ENCODE measurements at regions of chr6 and their contacts with region 1.

Region 1: GRCh38 chr6:134247231-134247833 is 70.6 kb downstream of the SGK1 start:
- DNase-seq: peak in 8 of 9 donors; percentile 67 to 96 (median 93)
- ATAC-seq: peak; percentile 97
- H3K4me3 ChIP-seq: peak overlapping the region; percentile 21
- H3K4me3 Mint-ChIP-seq: peak overlapping the region; percentile 50 to 84 (median 75)
- H3K27ac ChIP-seq: peak overlapping the region; percentile 77
- H3K27ac Mint-ChIP-seq: peak overlapping the region; percentile 83 to 99 (median 94)
- H3K4me1 ChIP-seq: peaks cover 34 to 60% of the 10 kb centered on the region in 2 donors
- H3K4me1 Mint-ChIP-seq: peaks cover 30 to 75% (median 63%) of the 10 kb centered on the region in 7 donors
- H3K27me3 ChIP-seq: no peaks in the 10 kb centered on the region
- H3K27me3 Mint-ChIP-seq: no peaks in the 10 kb centered on the region

Region 2: GRCh38 chr6:133952815-133953633 is 294.3 kb before region 1 on chr6 and contains the start of gene TBPL1:
- CTCF ChIA-PET with region 1: no interaction called
- POLR2A ChIA-PET with region 1: no interaction called
- intact Hi-C with region 1: loop called in 1 of 2 experiments (anchors 5 kb)
- DNase-seq: peak; percentile 60 to 81 (median 78)
- ATAC-seq: peak; percentile 95
- H3K4me3 ChIP-seq: peak within 1 kb of the TSS; percentile 85
- H3K4me3 Mint-ChIP-seq: peak within 1 kb of the TSS; percentile 96 to 100 (median 98)
- H3K27ac ChIP-seq: peak within 1 kb of the TSS; percentile 81
- H3K27ac Mint-ChIP-seq: peak within 1 kb of the TSS; percentile 83 to 99 (median 95)
- H3K4me1 ChIP-seq: peaks cover 10 to 25% of the 10 kb centered on the region in 2 donors
- H3K4me1 Mint-ChIP-seq: peaks cover 32 to 53% (median 45%) of the 10 kb centered on the region in 7 donors
- H3K27me3 ChIP-seq: no peaks in the 10 kb centered on the region
- H3K27me3 Mint-ChIP-seq: peaks cover 0 to 10% (median 0%) of the 10 kb centered on the region in 5 donors
- total RNA-seq, gene TBPL1: 21.0 to 34.7 (median 25.4) TPM

Region 3: GRCh38 chr6:134205366-134205765 is 42.0 kb before region 1 on chr6:
- CTCF ChIA-PET with region 1: no interaction called
- POLR2A ChIA-PET with region 1: no interaction called
- intact Hi-C with region 1: no loop called
- DNase-seq: no peak
- ATAC-seq: no peak
- H3K4me3 ChIP-seq: no peak overlapping the region
- H3K4me3 Mint-ChIP-seq: no peak overlapping the region
- H3K27ac ChIP-seq: no peak overlapping the region
- H3K27ac Mint-ChIP-seq: no peak overlapping the region
- H3K4me1 ChIP-seq: no peaks in the 10 kb centered on the region
- H3K4me1 Mint-ChIP-seq: peaks cover 0 to 8% (median 4%) of the 10 kb centered on the region in 7 donors
- H3K27me3 ChIP-seq: no peaks in the 10 kb centered on the region
- H3K27me3 Mint-ChIP-seq: peaks cover 0 to 3% (median 0%) of the 10 kb centered on the region in 5 donors

Region 4: GRCh38 chr6:134288538-134289203 is 41.3 kb after region 1 on chr6:
- CTCF ChIA-PET with region 1: no interaction called
- POLR2A ChIA-PET with region 1: interaction called, 3 read pairs
- intact Hi-C with region 1: loop called (anchors 1 to 5 kb)
- DNase-seq: peak in 4 of 9 donors; percentile 6 to 50 (median 28)
- ATAC-seq: peak; percentile 81
- H3K4me3 ChIP-seq: no peak overlapping the region
- H3K4me3 Mint-ChIP-seq: peak overlapping the region in 7 of 10 donors; percentile 7 to 74 (median 46)
- H3K27ac ChIP-seq: no peak overlapping the region
- H3K27ac Mint-ChIP-seq: peak overlapping the region in 8 of 9 donors; percentile 23 to 87 (median 70)
- H3K4me1 ChIP-seq: peaks cover 7 to 9% of the 10 kb centered on the region in 2 donors
- H3K4me1 Mint-ChIP-seq: peaks cover 14 to 41% (median 20%) of the 10 kb centered on the region in 7 donors
- H3K27me3 ChIP-seq: no peaks in the 10 kb centered on the region
- H3K27me3 Mint-ChIP-seq: no peaks in the 10 kb centered on the region

Region 5: GRCh38 chr6:134363318-134364039 is 116.1 kb after region 1 on chr6:
- CTCF ChIA-PET with region 1: no interaction called
- POLR2A ChIA-PET with region 1: interaction called, 10 read pairs
- intact Hi-C with region 1: no loop called
- DNase-seq: no peak
- ATAC-seq: no peak
- H3K4me3 ChIP-seq: no peak overlapping the region
- H3K4me3 Mint-ChIP-seq: no peak overlapping the region
- H3K27ac ChIP-seq: no peak overlapping the region
- H3K27ac Mint-ChIP-seq: no peak overlapping the region
- H3K4me1 ChIP-seq: no peaks in the 10 kb centered on the region
- H3K4me1 Mint-ChIP-seq: peaks cover 0 to 9% (median 4%) of the 10 kb centered on the region in 7 donors
- H3K27me3 ChIP-seq: no peaks in the 10 kb centered on the region
- H3K27me3 Mint-ChIP-seq: no peaks in the 10 kb centered on the region

Region 6: DNA sequence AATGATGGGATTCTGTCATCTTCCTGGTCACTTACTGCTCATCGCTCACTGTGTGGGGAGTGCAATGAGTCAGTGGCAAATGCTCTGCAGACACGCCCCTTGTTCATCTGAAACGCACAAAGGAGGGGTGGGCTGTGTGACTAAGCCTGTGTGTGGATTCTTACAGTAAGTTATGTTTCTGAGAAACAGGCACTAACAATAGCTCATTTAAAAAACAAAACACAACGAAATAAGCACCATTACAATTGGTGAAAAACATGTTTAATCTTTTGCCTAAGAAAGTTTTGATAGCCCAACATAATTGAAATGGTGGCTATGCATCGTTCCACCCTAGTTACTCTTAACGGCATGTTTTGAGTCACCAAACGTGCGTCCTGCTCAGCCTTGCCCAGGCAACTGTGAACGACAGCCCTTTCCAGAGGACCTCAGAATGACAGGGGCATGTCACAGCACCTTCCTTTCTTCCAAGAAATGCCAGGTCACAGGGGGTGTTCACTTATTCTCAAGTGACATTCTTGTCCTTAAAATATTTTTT is 189.0 kb after region 1 on chr6:
- CTCF ChIA-PET with region 1: no interaction called
- POLR2A ChIA-PET with region 1: interaction called, 3 read pairs
- intact Hi-C with region 1: loop called in 1 of 2 experiments (anchors 1 kb)
- DNase-seq: peak in 1 of 9 donors; percentile 65
- ATAC-seq: peak; percentile 84
- H3K4me3 ChIP-seq: peak overlapping the region; percentile 14
- H3K4me3 Mint-ChIP-seq: peak overlapping the region in 2 of 10 donors; percentile 9 to 81
- H3K27ac ChIP-seq: no peak overlapping the region
- H3K27ac Mint-ChIP-seq: peak overlapping the region in 3 of 9 donors; percentile 6 to 94 (median 81)
- H3K4me1 ChIP-seq: no peaks in the 10 kb centered on the region
- H3K4me1 Mint-ChIP-seq: peaks cover 7 to 49% (median 21%) of the 10 kb centered on the region in 7 donors
- H3K27me3 ChIP-seq: no peaks in the 10 kb centered on the region
- H3K27me3 Mint-ChIP-seq: no peaks in the 10 kb centered on the region

Region 7: GRCh38 chr6:134640975-134641429 is 393.7 kb after region 1 on chr6:
- CTCF ChIA-PET with region 1: no interaction called
- POLR2A ChIA-PET with region 1: no interaction called
- intact Hi-C with region 1: loop called in 1 of 2 experiments (anchors 1 kb)
- DNase-seq: peak; percentile 33 to 82 (median 74)
- ATAC-seq: peak; percentile 97
- H3K4me3 ChIP-seq: no peak overlapping the region
- H3K4me3 Mint-ChIP-seq: peak overlapping the region in 1 of 10 donors; percentile 12
- H3K27ac ChIP-seq: no peak overlapping the region
- H3K27ac Mint-ChIP-seq: peak overlapping the region in 4 of 9 donors; percentile 5 to 44 (median 29)
- H3K4me1 ChIP-seq: peaks cover 0 to 7% of the 10 kb centered on the region in 2 donors
- H3K4me1 Mint-ChIP-seq: peaks cover 1 to 34% (median 27%) of the 10 kb centered on the region in 7 donors
- H3K27me3 ChIP-seq: no peaks in the 10 kb centered on the region
- H3K27me3 Mint-ChIP-seq: peaks cover 0 to 3% (median 0%) of the 10 kb centered on the region in 5 donors

Measured in naive thymus-derived CD4-positive, alpha-beta T cell (primary cell).